Activated T-helper 2 cell treated with anti-CD3 and anti-CD28 coated beads, Interferon-gamma antibody, Interleukin-2, Interleukin-4, amounts not matched to agents 10 μg/mL and 5 μg/mL and 100 μg/mL, durations not matched to agents 14 hours and 24 hours and 36 hours (primary cell): ENCODE measurements at regions of chr2 and their contacts with region 1.

Region 1: GRCh38 chr2:74498500-74499266 is 720 bp downstream of the LBX2 start:
- DNase-seq: no peak
- H3K4me3 Mint-ChIP-seq: peak overlapping the region; percentile 86
- H3K27ac Mint-ChIP-seq: peak overlapping the region; percentile 72
- H3K4me1 Mint-ChIP-seq: peaks cover 31% of the 10 kb centered on the region
- H3K27me3 Mint-ChIP-seq: peaks cover 30% of the 10 kb centered on the region

Region 2: GRCh38 chr2:74482801-74483674 is 15.6 kb before region 1 on chr2 and contains the starts of genes CCDC142 and TTC31:
- intact Hi-C with region 1: loop called (anchors 2 kb)
- DNase-seq: peak; percentile 91
- H3K4me3 Mint-ChIP-seq: peak within 1 kb of the TSS; percentile 99
- H3K27ac Mint-ChIP-seq: peak within 1 kb of the TSS; percentile 99
- H3K4me1 Mint-ChIP-seq: peaks cover 26% of the 10 kb centered on the region
- H3K27me3 Mint-ChIP-seq: no peaks in the 10 kb centered on the region
- total RNA-seq, gene CCDC142: 25.1 and 26.9 TPM in 2 replicates
- total RNA-seq, gene TTC31: 35.1 and 35.9 TPM in 2 replicates

Region 3: GRCh38 chr2:74515981-74516633 is 17.4 kb after region 1 on chr2:
- intact Hi-C with region 1: loop called (anchors 1 kb)
- DNase-seq: peak; percentile 65
- H3K4me3 Mint-ChIP-seq: peak overlapping the region; percentile 68
- H3K27ac Mint-ChIP-seq: no peak overlapping the region
- H3K4me1 Mint-ChIP-seq: peaks cover 15% of the 10 kb centered on the region
- H3K27me3 Mint-ChIP-seq: peaks cover 60% of the 10 kb centered on the region